CD4-positive, alpha-beta T cell (primary cell): ENCODE measurements at regions of chr2 and their contacts with region 1.

Region 1: DNA sequence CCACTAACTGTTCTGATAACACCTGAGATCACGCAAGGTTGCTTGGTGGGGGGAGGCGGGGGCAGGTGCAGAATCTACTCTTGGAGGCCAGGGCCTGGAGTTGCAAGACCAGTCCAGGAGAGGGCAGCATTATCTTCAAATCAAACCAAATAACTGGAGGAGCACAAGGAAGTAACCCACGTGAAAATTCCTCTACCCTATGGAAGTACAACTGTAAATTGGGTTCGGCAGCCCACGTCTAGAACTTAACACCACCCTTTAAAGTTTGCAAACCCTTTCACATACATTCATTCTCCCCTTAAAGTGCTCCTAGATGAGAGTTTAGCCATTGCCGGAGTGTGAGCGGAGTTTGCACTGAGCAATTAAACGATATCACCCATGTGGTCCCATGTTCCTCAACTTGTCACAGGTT is 19.6 kb upstream of the CXCR1 start:
- DNase-seq: peak; percentile 49 to 86 (median 64)
- ATAC-seq: peak; percentile 99
- H3K4me3 ChIP-seq: no peak overlapping the region
- H3K4me3 Mint-ChIP-seq: no peak overlapping the region
- H3K27ac ChIP-seq: no peak overlapping the region
- H3K27ac Mint-ChIP-seq: no peak overlapping the region
- H3K4me1 ChIP-seq: peaks cover 4% of the 10 kb centered on the region
- H3K4me1 Mint-ChIP-seq: peaks cover 6% of the 10 kb centered on the region
- H3K27me3 ChIP-seq: no peaks in the 10 kb centered on the region
- H3K27me3 Mint-ChIP-seq: no peaks in the 10 kb centered on the region
- CTCF ChIP-seq: peak; percentile 88

Region 2: GRCh38 chr2:218145125-218145524 is 41.2 kb before region 1 on chr2:
- CTCF ChIA-PET with region 1: no interaction called
- POLR2A ChIA-PET with region 1: no interaction called
- intact Hi-C with region 1: no loop called
- DNase-seq: no peak
- ATAC-seq: no peak
- H3K4me3 ChIP-seq: no peak overlapping the region
- H3K4me3 Mint-ChIP-seq: no peak overlapping the region
- H3K27ac ChIP-seq: no peak overlapping the region
- H3K27ac Mint-ChIP-seq: no peak overlapping the region
- H3K4me1 ChIP-seq: no peaks in the 10 kb centered on the region
- H3K4me1 Mint-ChIP-seq: no peaks in the 10 kb centered on the region
- H3K27me3 ChIP-seq: no peaks in the 10 kb centered on the region
- H3K27me3 Mint-ChIP-seq: peaks cover 3% of the 10 kb centered on the region
- CTCF ChIP-seq: no peak

Region 3: DNA sequence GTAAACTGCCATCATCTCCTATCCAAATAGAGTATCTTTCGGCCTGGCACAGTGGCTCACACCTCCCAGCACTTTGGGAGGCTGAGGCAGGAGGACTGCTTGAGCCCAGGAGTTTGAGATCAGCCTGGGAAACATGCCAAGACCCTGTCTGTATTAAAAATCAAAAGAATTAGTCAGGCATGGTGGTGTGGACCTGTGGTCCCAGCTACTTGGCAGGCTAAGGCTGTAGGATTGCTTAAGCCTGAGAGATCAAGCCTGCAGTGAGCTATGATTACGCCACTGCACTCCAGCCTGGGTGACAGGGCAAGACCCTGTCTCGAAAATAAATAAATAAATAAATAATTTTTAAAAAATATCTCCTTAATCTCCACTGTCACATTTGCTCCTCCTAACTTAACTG is 15.9 kb after region 1 on chr2:
- CTCF ChIA-PET with region 1: no interaction called
- POLR2A ChIA-PET with region 1: no interaction called
- intact Hi-C with region 1: no loop called
- DNase-seq: no peak
- ATAC-seq: no peak
- H3K4me3 ChIP-seq: no peak overlapping the region
- H3K4me3 Mint-ChIP-seq: no peak overlapping the region
- H3K27ac ChIP-seq: no peak overlapping the region
- H3K27ac Mint-ChIP-seq: no peak overlapping the region
- H3K4me1 ChIP-seq: no peaks in the 10 kb centered on the region
- H3K4me1 Mint-ChIP-seq: no peaks in the 10 kb centered on the region
- H3K27me3 ChIP-seq: peaks cover 0 to 2% of the 10 kb centered on the region in 2 experiments
- H3K27me3 Mint-ChIP-seq: no peaks in the 10 kb centered on the region
- CTCF ChIP-seq: no peak

Region 4: DNA sequence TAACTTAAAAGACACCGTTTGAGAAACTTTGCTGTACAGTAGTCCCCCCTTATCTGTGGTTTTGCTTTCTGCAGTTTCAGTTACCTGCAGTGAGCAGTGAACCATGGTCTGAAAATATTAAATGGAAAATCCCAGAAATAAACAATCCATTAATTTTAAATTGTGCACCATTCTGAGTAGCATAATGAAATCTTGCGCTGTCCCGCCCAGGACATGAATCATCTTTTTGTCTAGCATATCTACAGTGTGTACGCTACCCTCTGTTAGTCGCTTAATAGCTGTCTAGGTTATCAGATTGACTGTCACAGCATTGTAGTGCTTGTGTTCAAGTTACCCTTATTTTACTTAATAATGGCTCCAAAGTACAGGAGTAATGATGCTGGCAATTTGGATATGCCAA is 36.7 kb after region 1 on chr2:
- CTCF ChIA-PET with region 1: no interaction called
- POLR2A ChIA-PET with region 1: no interaction called
- intact Hi-C with region 1: loop called (anchors 5 kb)
- DNase-seq: peak in 6 of 14 experiments; percentile 11 to 50 (median 37)
- ATAC-seq: peak; percentile 50
- H3K4me3 ChIP-seq: peak overlapping the region; percentile 4
- H3K4me3 Mint-ChIP-seq: peak overlapping the region; percentile 67
- H3K27ac ChIP-seq: peak overlapping the region; percentile 12 to 45
- H3K27ac Mint-ChIP-seq: peak overlapping the region; percentile 96
- H3K4me1 ChIP-seq: peaks cover 86% of the 10 kb centered on the region
- H3K4me1 Mint-ChIP-seq: peaks cover 91% of the 10 kb centered on the region
- H3K27me3 ChIP-seq: no peaks in the 10 kb centered on the region
- H3K27me3 Mint-ChIP-seq: no peaks in the 10 kb centered on the region
- CTCF ChIP-seq: no peak

Region 5: DNA sequence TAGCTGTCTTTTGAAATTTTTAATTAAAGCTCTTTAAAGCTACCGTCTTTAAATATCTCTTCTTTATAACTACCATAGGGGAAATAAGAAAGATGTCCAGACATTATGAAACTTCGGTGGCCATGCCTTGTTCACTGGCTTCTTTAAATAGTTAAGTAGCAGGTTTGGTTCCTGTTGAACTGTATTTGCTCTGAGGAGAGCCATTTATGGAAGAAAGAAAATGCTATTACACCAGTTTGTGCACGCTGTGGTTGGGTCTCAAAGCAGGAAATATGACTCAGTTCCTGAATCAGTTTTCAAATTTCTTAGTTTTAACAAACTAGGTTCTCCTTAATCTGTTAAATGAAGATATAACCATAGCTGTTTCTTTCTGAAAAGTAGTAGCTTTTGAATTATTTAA is 42.9 kb after region 1 on chr2:
- CTCF ChIA-PET with region 1: no interaction called
- POLR2A ChIA-PET with region 1: interaction called, 4 read pairs
- intact Hi-C with region 1: loop called (anchors 5 kb)
- DNase-seq: peak in 10 of 14 experiments; percentile 13 to 85 (median 36)
- ATAC-seq: peak; percentile 82
- H3K4me3 ChIP-seq: no peak overlapping the region
- H3K4me3 Mint-ChIP-seq: peak overlapping the region; percentile 71
- H3K27ac ChIP-seq: peak overlapping the region; percentile 51 to 60
- H3K27ac Mint-ChIP-seq: peak overlapping the region; percentile 91
- H3K4me1 ChIP-seq: peaks cover 70% of the 10 kb centered on the region
- H3K4me1 Mint-ChIP-seq: peaks cover 78% of the 10 kb centered on the region
- H3K27me3 ChIP-seq: no peaks in the 10 kb centered on the region
- H3K27me3 Mint-ChIP-seq: no peaks in the 10 kb centered on the region
- CTCF ChIP-seq: no peak

Region 6: GRCh38 chr2:218257390-218257981 is 71.1 kb after region 1 on chr2:
- CTCF ChIA-PET with region 1: interaction called, 5 read pairs
- POLR2A ChIA-PET with region 1: no interaction called
- intact Hi-C with region 1: loop called (anchors 1 to 2 kb)
- DNase-seq: peak; percentile 43 to 84 (median 58)
- ATAC-seq: peak; percentile 80
- H3K4me3 ChIP-seq: no peak overlapping the region
- H3K4me3 Mint-ChIP-seq: peak overlapping the region; percentile 51
- H3K27ac ChIP-seq: peak overlapping the region; percentile 56 to 67
- H3K27ac Mint-ChIP-seq: peak overlapping the region; percentile 91
- H3K4me1 ChIP-seq: peaks cover 22% of the 10 kb centered on the region
- H3K4me1 Mint-ChIP-seq: peaks cover 22% of the 10 kb centered on the region
- H3K27me3 ChIP-seq: no peaks in the 10 kb centered on the region
- H3K27me3 Mint-ChIP-seq: no peaks in the 10 kb centered on the region
- CTCF ChIP-seq: peak; percentile 64

Region 7: DNA sequence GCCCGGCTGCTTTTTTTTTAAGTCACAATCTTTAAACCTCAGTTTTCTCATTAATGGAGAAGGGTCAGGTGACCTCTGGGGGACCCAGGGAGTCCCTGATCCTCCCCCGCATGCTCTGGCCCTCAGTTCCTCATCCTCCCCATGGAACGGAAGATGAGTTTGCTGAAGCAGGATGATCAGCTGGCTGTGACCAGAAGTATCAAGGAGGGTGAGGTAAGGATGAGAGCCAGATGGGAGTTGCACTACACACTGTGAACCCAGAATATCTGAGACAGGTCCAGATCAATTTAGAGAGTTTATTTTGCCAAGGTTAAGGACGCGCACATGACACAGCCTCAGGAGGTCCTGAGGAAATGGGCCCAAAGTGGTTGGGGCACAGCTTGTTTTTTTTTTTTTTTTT is 174.1 kb after region 1 on chr2:
- CTCF ChIA-PET with region 1: no interaction called
- POLR2A ChIA-PET with region 1: no interaction called
- intact Hi-C with region 1: loop called in 1 of 2 experiments (anchors 2 kb)
- DNase-seq: peak in 2 of 14 experiments; percentile 45 to 63
- ATAC-seq: no peak
- H3K4me3 ChIP-seq: no peak overlapping the region
- H3K4me3 Mint-ChIP-seq: no peak overlapping the region
- H3K27ac ChIP-seq: no peak overlapping the region
- H3K27ac Mint-ChIP-seq: no peak overlapping the region
- H3K4me1 ChIP-seq: peaks cover 8% of the 10 kb centered on the region
- H3K4me1 Mint-ChIP-seq: peaks cover 2% of the 10 kb centered on the region
- H3K27me3 ChIP-seq: no peaks in the 10 kb centered on the region
- H3K27me3 Mint-ChIP-seq: no peaks in the 10 kb centered on the region
- CTCF ChIP-seq: no peak

Region 8: GRCh38 chr2:218466016-218466521 is 279.7 kb after region 1 on chr2:
- CTCF ChIA-PET with region 1: no interaction called
- POLR2A ChIA-PET with region 1: no interaction called
- intact Hi-C with region 1: loop called in 1 of 2 experiments (anchors 5 kb)
- DNase-seq: peak in 3 of 14 experiments; percentile 13 to 31 (median 30)
- ATAC-seq: no peak
- H3K4me3 ChIP-seq: no peak overlapping the region
- H3K4me3 Mint-ChIP-seq: no peak overlapping the region
- H3K27ac ChIP-seq: no peak overlapping the region
- H3K27ac Mint-ChIP-seq: no peak overlapping the region
- H3K4me1 ChIP-seq: no peaks in the 10 kb centered on the region
- H3K4me1 Mint-ChIP-seq: peaks cover 7% of the 10 kb centered on the region
- H3K27me3 ChIP-seq: no peaks in the 10 kb centered on the region
- H3K27me3 Mint-ChIP-seq: no peaks in the 10 kb centered on the region
- CTCF ChIP-seq: peak; percentile 74

Region 9: GRCh38 chr2:218659258-218659987 is 473.1 kb after region 1 on chr2 and contains the starts of genes BCS1L and ZNF142:
- CTCF ChIA-PET with region 1: no interaction called
- POLR2A ChIA-PET with region 1: no interaction called
- intact Hi-C with region 1: loop called in 1 of 2 experiments (anchors 10 kb)
- DNase-seq: peak; percentile 82 to 95 (median 92)
- ATAC-seq: peak; percentile 98
- H3K4me3 ChIP-seq: peak within 1 kb of the TSS; percentile 79
- H3K4me3 Mint-ChIP-seq: peak within 1 kb of the TSS; percentile 95
- H3K27ac ChIP-seq: peak within 1 kb of the TSS; percentile 53 to 83
- H3K27ac Mint-ChIP-seq: peak within 1 kb of the TSS; percentile 89
- H3K4me1 ChIP-seq: peaks cover 19% of the 10 kb centered on the region
- H3K4me1 Mint-ChIP-seq: peaks cover 35% of the 10 kb centered on the region
- H3K27me3 ChIP-seq: no peaks in the 10 kb centered on the region
- H3K27me3 Mint-ChIP-seq: no peaks in the 10 kb centered on the region
- CTCF ChIP-seq: no peak
- total RNA-seq, gene BCS1L: 11.4 to 12.7 TPM
- total RNA-seq, gene ZNF142: 40.3 to 44.2 TPM